T-cell (primary cell): ENCODE measurements at regions of chr6 and their contacts with region 1.

Region 1: GRCh38 chr6:107248147-107248546 is 132.8 kb upstream of the BEND3 start:
- DNase-seq: no peak
- ATAC-seq: no peak
- H3K4me3 ChIP-seq: no peak overlapping the region
- H3K4me3 Mint-ChIP-seq: no peak overlapping the region
- H3K27ac ChIP-seq: no peak overlapping the region
- H3K27ac Mint-ChIP-seq: no peak overlapping the region
- H3K4me1 ChIP-seq: no peaks in the 10 kb centered on the region
- H3K4me1 Mint-ChIP-seq: no peaks in the 10 kb centered on the region
- H3K27me3 ChIP-seq: no peaks in the 10 kb centered on the region
- H3K27me3 Mint-ChIP-seq: no peaks in the 10 kb centered on the region

Region 2: GRCh38 chr6:106823732-106824351 is 424.3 kb before region 1 on chr6:
- CTCF ChIA-PET with region 1: no interaction called
- POLR2A ChIA-PET with region 1: interaction called in 1 of 2 experiments, 11 read pairs
- DNase-seq: no peak
- ATAC-seq: no peak
- H3K4me3 ChIP-seq: no peak overlapping the region
- H3K4me3 Mint-ChIP-seq: no peak overlapping the region
- H3K27ac ChIP-seq: no peak overlapping the region
- H3K27ac Mint-ChIP-seq: no peak overlapping the region
- H3K4me1 ChIP-seq: no peaks in the 10 kb centered on the region
- H3K4me1 Mint-ChIP-seq: no peaks in the 10 kb centered on the region
- H3K27me3 ChIP-seq: peaks cover 0 to 20% of the 10 kb centered on the region in 2 experiments
- H3K27me3 Mint-ChIP-seq: peaks cover 4 to 10% of the 10 kb centered on the region in 2 donors

Region 3: DNA sequence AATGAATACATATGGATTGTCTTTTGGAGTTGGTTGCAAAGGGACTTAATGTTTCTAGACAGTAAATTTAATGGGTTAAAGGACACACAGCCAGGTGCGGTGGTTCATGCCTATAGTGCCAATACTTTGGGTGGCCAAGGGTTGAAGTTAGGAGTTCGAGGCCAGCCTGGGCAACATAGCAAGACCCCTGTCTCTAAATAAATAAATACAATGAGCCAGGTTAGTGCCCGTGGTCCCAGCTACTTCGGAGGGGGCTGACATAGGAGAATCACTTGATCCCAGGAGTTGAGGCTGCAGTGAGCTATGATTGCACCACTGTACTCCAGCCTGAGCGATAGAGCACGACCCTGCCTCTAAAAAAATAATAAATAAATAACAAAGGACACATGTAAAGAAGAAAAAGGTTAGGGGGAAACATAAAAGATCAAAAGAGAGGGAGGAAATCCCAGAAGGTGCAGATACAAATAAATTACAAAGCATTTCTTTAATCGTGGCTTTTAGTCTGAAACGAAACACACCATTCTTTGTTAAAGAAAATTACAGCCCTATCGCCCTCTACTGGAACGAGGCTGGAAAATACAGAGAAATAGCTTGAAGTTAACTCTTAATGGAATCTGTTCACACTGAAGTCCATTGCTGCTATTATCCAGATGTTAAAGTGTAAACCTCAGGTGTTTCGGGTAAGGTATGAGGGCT is 618.6 kb after region 1 on chr6:
- CTCF ChIA-PET with region 1: no interaction called
- POLR2A ChIA-PET with region 1: no interaction called
- DNase-seq: peak in 20 of 35 experiments; percentile 10 to 75 (median 20)
- ATAC-seq: peak; percentile 60 to 73 (median 67)
- H3K4me3 ChIP-seq: no peak overlapping the region
- H3K4me3 Mint-ChIP-seq: peak overlapping the region in 1 of 3 donors; percentile 31
- H3K27ac ChIP-seq: no peak overlapping the region
- H3K27ac Mint-ChIP-seq: no peak overlapping the region
- H3K4me1 ChIP-seq: peaks cover 0 to 4% of the 10 kb centered on the region in 2 experiments
- H3K4me1 Mint-ChIP-seq: peaks cover 0 to 7% (median 4%) of the 10 kb centered on the region in 3 donors
- H3K27me3 ChIP-seq: peaks cover 0 to 11% of the 10 kb centered on the region in 2 experiments
- H3K27me3 Mint-ChIP-seq: no peaks in the 10 kb centered on the region